ENCODE measurements at regions of chr2 and their contacts with region 1.

Region 1: DNA sequence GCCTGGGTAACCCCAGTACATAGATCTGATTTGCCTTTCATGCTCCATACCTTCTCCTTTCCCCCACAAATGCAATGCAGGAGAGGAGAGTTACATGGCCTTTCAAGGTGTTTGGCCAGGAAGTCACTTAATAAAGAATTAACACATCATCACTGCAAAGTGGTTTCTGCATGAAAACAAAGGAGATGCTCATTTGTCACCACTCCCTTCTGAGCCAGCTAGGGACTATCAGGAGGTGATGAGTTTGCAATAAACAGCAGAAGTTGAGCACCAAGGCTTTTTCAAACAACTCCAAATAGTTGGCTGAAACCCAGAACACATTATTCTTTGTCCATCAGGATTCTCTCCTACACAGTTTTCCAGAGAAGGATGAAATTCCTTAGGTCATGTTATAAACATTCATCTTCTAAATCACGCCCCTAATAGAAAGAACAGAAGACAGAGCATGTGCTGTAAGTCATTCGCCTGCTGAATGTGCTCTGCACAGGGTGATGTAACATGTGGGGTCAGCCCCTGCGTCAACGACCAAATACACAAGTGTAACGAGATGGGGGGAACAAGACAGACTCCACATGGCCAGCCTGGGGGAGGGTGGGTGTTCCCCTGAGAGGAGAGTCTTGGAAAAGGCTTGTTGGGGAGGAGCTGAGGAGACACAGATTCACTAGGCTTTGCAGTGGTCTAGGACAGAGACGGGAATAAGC is 87.3 kb upstream of the RMDN2 start:
- DNase-seq: peak; percentile 42 to 55 (median 55)
- ATAC-seq: peak; percentile 84 to 89
- H3K4me3 ChIP-seq: no peak overlapping the region
- H3K27ac ChIP-seq: no peak overlapping the region
- H3K4me1 ChIP-seq: no peaks in the 10 kb centered on the region
- H3K27me3 ChIP-seq: no peaks in the 10 kb centered on the region

Region 2: GRCh38 chr2:37394796-37395555 is 442.8 kb before region 1 on chr2:
- intact Hi-C with region 1: loop called in 1 of 4 experiments (anchors 5 kb)
- DNase-seq: no peak
- ATAC-seq: peak; percentile 39 to 88
- H3K4me3 ChIP-seq: no peak overlapping the region
- H3K27ac ChIP-seq: no peak overlapping the region
- H3K4me1 ChIP-seq: no peaks in the 10 kb centered on the region
- H3K27me3 ChIP-seq: no peaks in the 10 kb centered on the region